ENCODE measurements at regions of chr9 and their contacts with region 1.

Region 1: GRCh38 chr9:75071530-75072124 is 16.3 kb downstream of the NMRK1 start:
- DNase-seq: no peak
- H3K4me3 ChIP-seq: no peak overlapping the region
- H3K27ac ChIP-seq: no peak overlapping the region
- H3K4me1 ChIP-seq: no peaks in the 10 kb centered on the region
- H3K27me3 ChIP-seq: no peaks in the 10 kb centered on the region
- CTCF ChIP-seq: no peak
- POLR2A ChIP-seq: no peak

Region 2: GRCh38 chr9:74773886-74774479 is 297.6 kb before region 1 on chr9:
- intact Hi-C with region 1: loop called (anchors 10 kb)
- DNase-seq: peak; percentile 70 to 75
- H3K4me3 ChIP-seq: no peak overlapping the region
- H3K27ac ChIP-seq: no peak overlapping the region
- H3K4me1 ChIP-seq: no peaks in the 10 kb centered on the region
- H3K27me3 ChIP-seq: no peaks in the 10 kb centered on the region
- CTCF ChIP-seq: peak; percentile 75 to 86 (median 79)
- POLR2A ChIP-seq: no peak

Region 3: DNA sequence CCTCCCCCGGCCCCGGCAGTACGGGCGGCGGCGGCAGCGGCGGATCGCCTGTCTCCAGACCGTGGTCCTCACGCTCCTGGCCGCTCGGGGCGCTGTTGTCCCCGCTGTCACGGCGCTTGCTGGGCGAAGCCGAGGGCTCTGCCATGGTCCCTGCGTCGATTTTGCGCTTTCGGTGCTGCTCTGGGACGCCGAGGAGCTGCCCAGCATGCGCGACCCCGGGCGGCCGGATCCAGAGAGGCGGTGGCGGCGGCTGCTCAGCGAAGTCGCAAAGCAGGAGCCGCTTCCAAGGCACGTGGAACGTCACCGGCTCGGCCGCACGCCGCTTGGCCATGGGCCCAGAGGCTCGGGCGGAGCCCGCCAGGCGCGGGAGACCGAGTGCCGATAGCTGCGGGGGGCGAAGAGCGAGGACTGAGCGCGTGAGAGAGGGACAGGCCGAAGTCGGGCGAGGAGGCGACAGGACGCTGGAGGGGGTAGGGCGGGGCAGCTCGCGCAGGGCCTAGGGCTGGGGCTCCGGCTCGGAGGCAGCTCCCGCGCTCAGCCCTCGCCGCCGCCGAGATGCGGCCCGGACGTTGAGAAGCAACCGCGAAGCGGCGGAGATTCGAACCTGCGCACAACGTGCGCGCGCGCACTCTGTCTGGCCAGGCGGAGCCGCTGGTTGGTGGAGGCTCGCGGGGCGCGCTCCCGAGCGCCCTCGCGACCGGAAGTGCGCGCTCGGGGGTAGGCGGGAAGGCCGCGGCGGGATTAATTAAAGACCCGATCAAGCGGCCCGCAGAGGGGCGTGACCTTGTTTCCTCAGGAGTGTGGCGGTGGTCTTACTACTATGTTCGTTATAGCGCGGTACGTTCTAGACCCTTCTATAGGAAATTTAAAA is 119.1 kb before region 1 on chr9 and contains the start of gene C9orf40:
- intact Hi-C with region 1: no loop called
- DNase-seq: peak; percentile 86 to 90
- H3K4me3 ChIP-seq: peak within 1 kb of the TSS; percentile 67 to 79
- H3K27ac ChIP-seq: peak within 1 kb of the TSS; percentile 97 to 98
- H3K4me1 ChIP-seq: no peaks in the 10 kb centered on the region
- H3K27me3 ChIP-seq: no peaks in the 10 kb centered on the region
- CTCF ChIP-seq: peak; percentile 72 to 91 (median 84)
- POLR2A ChIP-seq: peak in 1 of 2 donors; percentile 56
- total RNA-seq, gene C9orf40: 2.8 to 17.6 (median 5.6) TPM

Region 4: DNA sequence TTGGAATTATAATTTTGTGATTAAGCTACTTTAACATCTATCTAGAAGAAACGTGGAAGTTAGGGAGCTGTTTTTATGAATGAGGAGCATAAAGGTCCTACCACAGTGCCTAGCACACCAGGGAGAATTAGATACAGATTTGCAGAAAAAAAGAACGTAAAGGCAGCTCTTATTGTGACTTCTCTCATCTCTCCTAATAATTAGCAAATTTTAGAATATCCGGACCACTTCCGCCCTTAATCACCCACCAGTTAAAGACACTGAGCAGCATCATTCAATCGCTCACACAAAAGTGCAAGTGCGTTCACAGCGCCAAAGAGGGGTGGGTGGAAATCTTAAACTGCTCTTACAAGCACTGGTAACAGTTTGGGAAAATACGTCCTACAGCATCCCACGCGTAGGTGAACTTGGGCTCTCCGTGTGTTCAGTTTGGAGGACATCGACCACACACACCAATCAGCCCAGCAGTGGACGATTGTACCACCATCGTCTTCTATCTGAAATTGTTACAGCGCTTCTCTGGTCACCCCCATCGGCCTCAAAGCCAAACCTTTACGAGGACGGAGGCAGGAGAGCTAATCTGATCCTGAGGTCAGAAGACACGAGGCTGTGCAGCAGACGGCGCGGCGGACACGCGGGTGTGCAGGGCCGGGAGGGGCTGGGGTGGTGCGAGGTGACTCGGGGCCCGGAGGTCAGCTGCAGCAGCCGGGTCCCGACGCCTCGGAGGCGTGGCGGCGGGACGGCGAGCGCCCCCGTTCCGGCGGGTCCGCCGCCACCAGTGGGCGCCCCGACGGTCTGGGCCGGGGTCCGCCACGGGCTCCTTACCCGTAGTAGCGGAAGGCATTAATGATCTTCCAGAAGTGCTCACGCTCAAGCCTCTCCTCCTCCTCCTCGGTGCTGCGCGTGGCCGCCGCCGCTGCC is 44.2 kb before region 1 on chr9:
- intact Hi-C with region 1: loop called (anchors 10 kb)
- DNase-seq: peak; percentile 51 to 53
- H3K4me3 ChIP-seq: peak overlapping the region; percentile 43 to 90
- H3K27ac ChIP-seq: peak overlapping the region; percentile 89 to 95
- H3K4me1 ChIP-seq: no peaks in the 10 kb centered on the region
- H3K27me3 ChIP-seq: no peaks in the 10 kb centered on the region
- CTCF ChIP-seq: no peak
- POLR2A ChIP-seq: no peak

Region 5: DNA sequence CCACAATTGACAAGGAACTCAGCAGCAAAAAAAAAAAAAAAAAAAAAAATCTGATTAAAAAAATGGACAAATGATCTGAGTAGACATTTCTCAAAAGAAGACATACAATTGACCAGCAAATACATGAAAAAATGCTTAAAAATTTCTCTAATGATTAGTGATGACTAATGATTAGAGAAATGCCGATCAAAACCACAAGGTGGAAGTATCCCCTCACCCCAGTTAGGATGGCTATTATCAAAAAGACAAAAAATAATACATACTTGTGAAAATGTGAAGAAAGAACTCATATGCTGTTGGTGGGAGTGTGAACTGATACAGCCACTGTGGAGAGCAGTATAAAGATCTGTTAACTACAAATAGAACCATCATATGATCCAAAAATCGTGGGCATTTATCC is 262.0 kb after region 1 on chr9:
- intact Hi-C with region 1: no loop called
- DNase-seq: no peak
- H3K4me3 ChIP-seq: no peak overlapping the region
- H3K27ac ChIP-seq: no peak overlapping the region
- H3K4me1 ChIP-seq: no peaks in the 10 kb centered on the region
- H3K27me3 ChIP-seq: no peaks in the 10 kb centered on the region
- CTCF ChIP-seq: peak; percentile 20 to 52 (median 31)
- POLR2A ChIP-seq: no peak

Measured in uterus (tissue), 4 donors.